ENCODE measurements at regions of chr1 and their contacts with region 1.

Region 1: GRCh38 chr1:110495926-110496600 is 22.9 kb downstream of the KCNA10 start:
- DNase-seq: peak; percentile 92
- ATAC-seq: peak; percentile 88
- H3K4me3 Mint-ChIP-seq: no peak overlapping the region
- H3K27ac Mint-ChIP-seq: no peak overlapping the region
- H3K4me1 Mint-ChIP-seq: no peaks in the 10 kb centered on the region
- H3K27me3 Mint-ChIP-seq: no peaks in the 10 kb centered on the region
- CTCF ChIP-seq: peak; percentile 89

Region 2: GRCh38 chr1:110209715-110210603 is 286.1 kb before region 1 on chr1 and contains the start of gene KCNC4:
- CTCF ChIA-PET with region 1: interaction called, 69 read pairs
- POLR2A ChIA-PET with region 1: interaction called, 3 read pairs
- intact Hi-C with region 1: loop called (anchors 10 kb)
- DNase-seq: peak; percentile 93
- ATAC-seq: peak; percentile 90
- H3K4me3 Mint-ChIP-seq: peak within 1 kb of the TSS; percentile 87
- H3K27ac Mint-ChIP-seq: peak within 1 kb of the TSS; percentile 85
- H3K4me1 Mint-ChIP-seq: peaks cover 44% of the 10 kb centered on the region
- H3K27me3 Mint-ChIP-seq: no peaks in the 10 kb centered on the region
- CTCF ChIP-seq: no peak
- total RNA-seq, gene KCNC4: 10.7 to 12.2 TPM

Region 3: DNA sequence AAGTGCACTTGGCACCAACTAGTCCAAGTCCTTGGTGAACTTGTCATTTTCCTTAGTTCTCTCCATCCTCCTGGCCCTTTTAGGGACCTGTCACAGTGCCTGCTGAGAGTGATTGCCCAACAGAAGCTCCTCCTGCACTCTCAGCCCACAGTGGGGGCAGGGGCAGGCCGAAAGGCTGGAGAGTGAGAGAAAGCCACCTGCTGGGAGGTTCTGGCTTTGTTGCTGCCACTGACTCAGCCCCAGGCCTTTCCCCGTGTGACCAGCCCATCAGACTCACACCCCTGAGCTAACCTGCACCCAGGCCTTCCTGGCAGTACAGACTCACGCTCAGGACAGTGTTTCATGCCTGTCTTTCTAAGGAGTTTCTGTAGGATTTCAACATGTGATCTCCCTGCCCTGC is 62.3 kb before region 1 on chr1:
- CTCF ChIA-PET with region 1: interaction called, 10 read pairs
- POLR2A ChIA-PET with region 1: no interaction called
- intact Hi-C with region 1: no loop called
- DNase-seq: peak; percentile 4
- ATAC-seq: no peak
- H3K4me3 Mint-ChIP-seq: no peak overlapping the region
- H3K27ac Mint-ChIP-seq: no peak overlapping the region
- H3K4me1 Mint-ChIP-seq: no peaks in the 10 kb centered on the region
- H3K27me3 Mint-ChIP-seq: peaks cover 4% of the 10 kb centered on the region
- CTCF ChIP-seq: no peak

Region 4: DNA sequence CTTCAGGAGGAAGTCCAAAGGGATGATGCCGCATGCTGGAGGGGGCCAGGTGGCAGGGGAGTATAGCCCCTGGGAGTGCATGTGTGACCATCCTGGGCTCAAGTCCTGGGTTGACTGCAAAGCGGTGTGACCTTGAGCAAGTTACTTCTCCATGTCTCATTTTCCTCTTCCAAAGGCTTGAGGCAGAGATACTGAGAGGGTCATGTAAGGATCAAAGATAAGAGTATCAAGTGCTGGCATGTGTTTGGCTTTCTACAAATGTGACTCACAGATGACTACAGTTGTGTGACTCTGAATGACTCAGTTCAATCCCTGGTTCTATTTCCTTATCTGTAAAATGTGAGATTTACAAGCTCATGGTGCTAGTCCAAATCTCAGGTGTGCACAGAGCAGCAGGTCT is 19.0 kb before region 1 on chr1:
- CTCF ChIA-PET with region 1: interaction called, 24 read pairs
- POLR2A ChIA-PET with region 1: no interaction called
- intact Hi-C with region 1: no loop called
- DNase-seq: no peak
- ATAC-seq: peak; percentile 73
- H3K4me3 Mint-ChIP-seq: no peak overlapping the region
- H3K27ac Mint-ChIP-seq: no peak overlapping the region
- H3K4me1 Mint-ChIP-seq: no peaks in the 10 kb centered on the region
- H3K27me3 Mint-ChIP-seq: peaks cover 4% of the 10 kb centered on the region
- CTCF ChIP-seq: no peak

Region 5: DNA sequence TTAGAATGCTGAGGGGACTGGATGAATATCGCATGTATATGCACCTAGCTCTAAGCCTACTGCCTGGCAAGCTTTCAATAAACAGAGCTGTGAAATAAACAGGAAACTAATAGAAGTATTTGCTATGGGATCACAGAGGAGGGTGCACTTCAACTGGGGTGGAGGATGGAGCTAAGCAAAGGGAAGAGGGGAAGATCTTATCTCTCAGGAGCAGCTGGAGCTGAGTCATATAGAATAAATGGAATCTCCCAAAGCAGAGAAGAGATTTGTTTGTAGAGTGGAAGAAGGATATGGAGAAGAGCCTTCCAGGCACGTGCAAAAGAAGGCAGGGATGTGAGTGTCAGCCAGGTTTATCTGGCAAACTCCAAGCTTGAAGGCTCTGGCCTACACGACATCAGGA is 39.9 kb after region 1 on chr1:
- CTCF ChIA-PET with region 1: interaction called, 10 read pairs
- POLR2A ChIA-PET with region 1: no interaction called
- intact Hi-C with region 1: no loop called
- DNase-seq: no peak
- ATAC-seq: no peak
- H3K4me3 Mint-ChIP-seq: no peak overlapping the region
- H3K27ac Mint-ChIP-seq: no peak overlapping the region
- H3K4me1 Mint-ChIP-seq: no peaks in the 10 kb centered on the region
- H3K27me3 Mint-ChIP-seq: no peaks in the 10 kb centered on the region
- CTCF ChIP-seq: no peak

Measured in activated CD8-positive, alpha-beta T cell treated with anti-CD3 and anti-CD28 coated beads for 36 hours (primary cell).